ENCODE measurements at regions of chr5 and their contacts with region 1.

Region 1: DNA sequence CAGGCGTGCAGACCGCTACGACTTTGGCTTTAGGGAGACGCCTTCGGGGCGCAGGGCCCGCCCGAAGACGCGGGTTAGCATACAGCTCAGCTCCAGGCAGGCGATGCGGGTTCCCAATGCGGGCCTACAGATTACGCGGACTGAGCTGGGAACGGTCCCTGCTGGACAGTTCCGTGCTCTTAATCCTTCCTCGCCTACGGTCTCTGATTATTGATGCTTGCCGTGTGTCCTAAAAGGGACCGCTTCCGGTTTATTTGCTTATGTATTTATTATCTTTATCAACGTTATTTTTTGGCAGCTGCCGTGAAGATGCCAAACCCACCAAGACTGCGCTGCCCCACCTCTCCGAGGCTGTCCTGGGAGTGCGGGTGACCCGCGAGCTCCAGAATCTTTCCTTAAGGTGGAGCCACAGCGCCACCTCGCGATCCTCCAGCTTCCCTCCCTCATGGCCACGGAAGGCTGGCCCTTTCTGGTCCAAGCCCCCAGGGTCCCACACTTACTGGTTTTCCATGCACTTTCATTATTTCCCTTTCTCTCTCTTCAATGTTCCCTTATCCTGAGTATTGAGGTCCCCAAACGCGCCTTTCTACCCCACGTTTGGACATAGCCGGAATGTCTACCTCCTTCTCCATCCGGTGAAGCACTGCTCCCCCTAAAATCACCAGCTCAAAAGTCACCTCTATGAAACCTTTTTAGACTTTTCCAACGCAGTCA is 7.0 kb upstream of the EBF1 start:
- DNase-seq: peak; percentile 82
- CTCF ChIP-seq: peak; percentile 91

Region 2: GRCh38 chr5:157820593-157821252 is 1286.0 kb before region 1 on chr5:
- in situ Hi-C with region 1: loop called (anchors 25 kb)
- DNase-seq: peak; percentile 31
- CTCF ChIP-seq: peak; percentile 13

Region 3: GRCh38 chr5:158174918-158175851 is 931.5 kb before region 1 on chr5:
- in situ Hi-C with region 1: loop called (anchors 5 kb)
- DNase-seq: peak; percentile 75
- CTCF ChIP-seq: peak; percentile 78

Region 4: GRCh38 chr5:158709279-158709678 is 397.4 kb before region 1 on chr5:
- in situ Hi-C with region 1: loop called (anchors 5 kb)
- DNase-seq: no peak
- CTCF ChIP-seq: no peak

Region 5: DNA sequence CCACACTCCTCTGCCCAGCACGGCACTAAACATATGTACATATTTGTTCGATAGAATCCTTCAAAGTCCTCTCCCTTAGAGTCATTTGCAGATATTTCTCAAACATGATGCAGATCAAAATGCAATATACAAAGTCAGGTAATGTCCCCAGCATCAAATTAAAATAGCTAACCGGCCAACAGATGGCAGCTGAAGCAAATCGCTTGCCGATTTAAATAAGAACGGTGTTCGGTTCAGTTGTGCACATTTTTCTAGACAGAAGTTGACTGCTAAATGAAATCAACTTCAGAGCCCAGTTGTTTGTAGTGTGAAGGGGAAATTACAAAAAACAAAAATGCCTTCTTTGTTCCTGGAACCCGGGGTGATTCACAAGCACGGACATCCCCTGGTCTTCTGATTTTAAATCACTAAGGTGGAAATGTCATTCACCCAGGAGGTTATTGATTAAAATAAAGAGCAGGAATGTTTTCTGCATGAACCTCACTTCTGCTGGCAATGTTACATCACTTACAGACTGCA is 226.2 kb before region 1 on chr5:
- in situ Hi-C with region 1: loop called (anchors 10 kb)
- DNase-seq: no peak
- CTCF ChIP-seq: no peak

Region 6: GRCh38 chr5:158953929-158954534 is 152.7 kb before region 1 on chr5:
- in situ Hi-C with region 1: no loop called
- DNase-seq: peak; percentile 55
- CTCF ChIP-seq: no peak